Activated CD4-positive, alpha-beta T cell treated with anti-CD3 and anti-CD28 coated beads for 36 hours (primary cell): ENCODE measurements at regions of chr17 and their contacts with region 1.

Region 1: GRCh38 chr17:7834962-7835813 is 1.2 kb downstream of the KDM6B start:
- DNase-seq: peak; percentile 96
- ATAC-seq: peak; percentile 57
- H3K4me3 Mint-ChIP-seq: peak overlapping the region; percentile 93
- H3K27ac Mint-ChIP-seq: peak overlapping the region; percentile 91
- H3K4me1 Mint-ChIP-seq: peaks cover 42% of the 10 kb centered on the region
- H3K27me3 Mint-ChIP-seq: no peaks in the 10 kb centered on the region

Region 2: GRCh38 chr17:7650509-7651096 is 184.6 kb before region 1 on chr17 and contains the start of gene ATP1B2:
- CTCF ChIA-PET with region 1: no interaction called
- POLR2A ChIA-PET with region 1: no interaction called
- intact Hi-C with region 1: no loop called
- DNase-seq: peak; percentile 82
- ATAC-seq: peak; percentile 92
- H3K4me3 Mint-ChIP-seq: peak within 1 kb of the TSS; percentile 62
- H3K27ac Mint-ChIP-seq: no peak within 1 kb of the TSS
- H3K4me1 Mint-ChIP-seq: peaks cover 17% of the 10 kb centered on the region
- H3K27me3 Mint-ChIP-seq: peaks cover 42% of the 10 kb centered on the region
- total RNA-seq, gene ATP1B2: 0.32 to 0.33 TPM

Region 3: DNA sequence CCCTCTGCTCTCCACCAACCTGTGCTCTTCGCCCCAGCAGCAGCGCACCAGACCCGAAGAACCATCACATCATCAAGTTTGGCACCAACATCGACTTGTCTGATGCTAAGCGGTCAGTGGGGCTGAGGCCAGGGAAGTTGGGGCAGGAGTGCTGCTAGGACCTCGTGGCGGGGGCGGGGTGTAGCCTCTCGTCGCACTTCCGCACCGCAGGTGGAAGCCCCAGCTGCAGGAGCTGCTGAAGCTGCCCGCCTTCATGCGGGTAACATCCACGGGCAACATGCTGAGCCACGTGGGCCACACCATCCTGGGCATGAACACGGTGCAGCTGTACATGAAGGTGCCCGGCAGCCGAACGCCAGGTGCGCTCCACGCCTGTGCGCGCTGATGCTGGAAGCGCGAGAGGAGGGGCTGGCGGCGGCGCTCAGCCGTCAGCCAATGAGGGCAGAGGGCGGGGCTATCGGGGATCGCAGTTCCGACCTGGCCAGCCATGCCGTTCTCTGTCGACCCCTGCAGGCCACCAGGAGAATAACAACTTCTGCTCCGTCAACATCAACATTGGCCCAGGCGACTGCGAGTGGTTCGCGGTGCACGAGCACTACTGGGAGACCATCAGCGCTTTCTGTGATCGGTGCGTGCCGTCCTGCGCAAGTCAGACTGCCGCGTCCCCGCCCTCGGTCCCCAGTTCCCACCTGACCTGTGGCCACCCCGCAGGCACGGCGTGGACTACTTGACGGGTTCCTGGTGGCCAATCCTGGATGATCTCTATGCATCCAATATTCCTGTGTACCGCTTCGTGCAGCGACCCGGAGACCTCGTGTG is 16.5 kb after region 1 on chr17:
- CTCF ChIA-PET with region 1: interaction called, 20 read pairs
- POLR2A ChIA-PET with region 1: interaction called, 3 read pairs
- intact Hi-C with region 1: loop called in 1 of 2 experiments (anchors 1 kb)
- DNase-seq: peak; percentile 97
- ATAC-seq: peak; percentile 91
- H3K4me3 Mint-ChIP-seq: peak overlapping the region; percentile 61
- H3K27ac Mint-ChIP-seq: peak overlapping the region; percentile 67
- H3K4me1 Mint-ChIP-seq: peaks cover 53% of the 10 kb centered on the region
- H3K27me3 Mint-ChIP-seq: no peaks in the 10 kb centered on the region

Region 4: DNA sequence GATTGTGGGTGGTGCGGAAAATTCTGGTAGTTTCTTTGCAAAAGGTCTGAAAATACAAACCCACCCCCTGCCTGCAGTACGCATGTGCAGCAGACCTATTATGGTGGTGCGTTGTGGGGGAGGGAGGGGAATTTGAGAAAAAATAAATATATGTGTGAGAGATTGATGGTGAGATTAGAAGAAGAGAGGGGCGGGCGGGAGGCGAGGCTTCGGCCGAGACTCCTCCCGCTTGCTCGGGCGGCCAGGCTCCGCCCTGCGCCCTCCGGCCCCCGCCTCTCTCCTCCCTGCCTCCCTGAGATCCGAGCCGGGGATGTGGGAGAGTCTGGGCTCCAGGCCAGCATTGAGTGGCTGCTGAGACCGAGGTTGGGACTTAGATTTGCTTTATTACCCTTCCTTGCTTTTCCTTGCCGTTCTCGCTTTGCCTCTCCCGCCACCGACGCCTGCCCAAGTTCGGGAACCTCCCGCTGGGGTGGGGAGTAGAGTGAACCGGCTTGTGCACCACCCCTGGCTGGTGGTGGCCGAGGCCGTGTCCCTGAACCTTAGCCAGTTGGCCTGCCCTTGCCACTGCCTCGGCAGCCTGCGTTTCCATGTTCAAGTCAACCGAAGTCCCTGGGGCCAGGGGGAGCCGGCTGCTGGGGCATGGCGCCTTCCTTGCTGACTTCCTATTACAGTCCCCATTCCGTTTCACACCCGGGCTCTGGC is 52.4 kb after region 1 on chr17:
- CTCF ChIA-PET with region 1: no interaction called
- POLR2A ChIA-PET with region 1: no interaction called
- intact Hi-C with region 1: loop called (anchors 1 to 2 kb)
- DNase-seq: peak; percentile 94
- ATAC-seq: peak; percentile 79
- H3K4me3 Mint-ChIP-seq: no peak overlapping the region
- H3K27ac Mint-ChIP-seq: no peak overlapping the region
- H3K4me1 Mint-ChIP-seq: peaks cover 4% of the 10 kb centered on the region
- H3K27me3 Mint-ChIP-seq: no peaks in the 10 kb centered on the region

Region 5: DNA sequence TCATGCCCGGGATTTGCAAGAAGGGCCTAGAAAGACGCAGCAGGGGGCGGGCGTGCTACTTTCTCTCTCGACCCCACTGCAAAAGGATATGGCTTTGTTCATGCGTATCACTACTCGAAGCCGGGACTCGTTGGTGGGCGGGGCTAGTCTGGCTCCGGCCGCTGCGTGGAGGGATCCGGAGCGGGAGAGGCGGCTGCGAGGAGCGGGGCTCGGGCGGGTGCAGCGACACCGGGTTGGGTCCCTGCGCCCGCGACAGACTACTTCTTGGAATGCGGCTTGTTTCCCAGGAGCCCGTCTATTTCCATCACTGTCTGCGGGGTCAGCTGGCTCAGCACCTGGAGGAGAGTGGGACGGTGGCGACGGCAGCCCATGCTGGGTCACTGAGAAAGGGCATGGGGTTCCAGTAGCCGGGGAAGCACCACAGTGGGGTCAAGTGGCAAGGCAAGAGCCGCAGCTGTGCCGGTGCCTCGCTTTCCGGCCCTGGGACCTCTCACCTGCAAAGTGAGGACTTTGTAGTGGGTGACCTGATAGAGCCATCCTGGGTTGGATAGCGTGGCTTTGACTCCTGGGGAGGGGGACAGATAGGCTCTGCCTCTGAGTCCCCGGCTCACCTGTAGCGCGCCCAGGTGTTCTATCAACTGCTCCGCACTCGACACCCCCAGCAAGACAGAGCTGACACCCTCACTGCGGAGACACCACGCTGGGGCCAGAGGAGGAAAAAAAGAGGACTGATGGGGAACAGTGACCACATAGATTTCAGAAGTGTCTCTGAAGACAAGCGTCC is 87.8 kb after region 1 on chr17:
- CTCF ChIA-PET with region 1: interaction called, 4 read pairs
- POLR2A ChIA-PET with region 1: no interaction called
- intact Hi-C with region 1: loop called in 1 of 2 experiments (anchors 2 kb)
- DNase-seq: peak; percentile 89
- ATAC-seq: peak; percentile 95
- H3K4me3 Mint-ChIP-seq: peak overlapping the region; percentile 56
- H3K27ac Mint-ChIP-seq: peak overlapping the region; percentile 81
- H3K4me1 Mint-ChIP-seq: peaks cover 23% of the 10 kb centered on the region
- H3K27me3 Mint-ChIP-seq: no peaks in the 10 kb centered on the region

Region 6: GRCh38 chr17:8288336-8289102 is 453.3 kb after region 1 on chr17 and contains the start of gene RANGRF:
- CTCF ChIA-PET with region 1: no interaction called
- POLR2A ChIA-PET with region 1: no interaction called
- intact Hi-C with region 1: loop called in 1 of 2 experiments (anchors 2 kb)
- DNase-seq: peak; percentile 91
- ATAC-seq: peak; percentile 94
- H3K4me3 Mint-ChIP-seq: peak within 1 kb of the TSS; percentile 84
- H3K27ac Mint-ChIP-seq: peak within 1 kb of the TSS; percentile 93
- H3K4me1 Mint-ChIP-seq: peaks cover 20% of the 10 kb centered on the region
- H3K27me3 Mint-ChIP-seq: no peaks in the 10 kb centered on the region
- total RNA-seq, gene RANGRF: 37.9 to 40.1 TPM